ENCODE measurements at regions of chr17 and their contacts with region 1.

Region 1: DNA sequence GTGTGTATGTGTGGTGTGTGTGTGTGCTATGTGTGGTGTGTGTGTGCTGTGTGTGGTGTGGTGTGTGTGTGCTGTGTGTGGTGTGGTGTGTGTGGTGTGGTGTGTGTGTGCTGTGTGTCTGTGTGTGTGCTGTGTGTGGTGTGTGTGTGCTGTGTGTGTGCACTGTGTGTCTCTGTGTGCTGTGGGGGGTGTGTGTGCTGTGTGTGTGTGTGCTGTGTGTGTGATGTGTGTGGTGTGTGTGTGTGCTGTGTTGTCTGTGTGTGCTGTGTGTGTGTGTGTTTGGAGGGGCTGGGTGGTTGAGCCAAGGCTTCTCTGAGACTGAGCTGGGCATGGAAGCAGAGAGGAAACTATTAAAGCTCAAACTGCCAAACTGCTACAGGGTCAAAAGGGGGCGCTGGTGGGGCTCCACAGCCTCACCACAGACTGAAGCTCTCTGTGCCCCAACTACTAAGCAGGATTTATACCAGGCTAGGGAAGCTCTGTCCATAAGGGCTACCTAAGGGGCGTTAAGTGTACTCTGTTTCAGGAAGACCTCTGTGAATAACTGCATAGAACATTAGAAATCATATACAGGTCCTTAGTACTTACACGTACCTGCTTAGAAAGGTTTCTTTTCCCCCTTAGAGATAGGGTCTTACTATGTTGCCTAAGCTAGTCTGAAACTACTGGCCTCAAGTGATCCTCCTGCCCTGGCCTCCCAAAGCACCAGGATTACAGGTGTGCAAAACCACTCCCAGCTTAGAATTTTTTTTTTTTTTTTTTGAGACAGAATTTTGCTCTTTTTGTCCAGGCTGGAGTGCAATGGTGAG is 27.8 kb upstream of the GHDC start:
- DNase-seq: no peak
- ATAC-seq: peak in 5 of 8 donors; percentile 4 to 68 (median 45)
- H3K4me3 ChIP-seq: no peak overlapping the region
- H3K27ac ChIP-seq: no peak overlapping the region
- H3K4me1 ChIP-seq: peaks cover under 1 to 13% (median 4%) of the 10 kb centered on the region in 9 donors
- H3K27me3 ChIP-seq: no peaks in the 10 kb centered on the region
- CTCF ChIP-seq: peak in 8 of 9 donors; percentile 8 to 59 (median 48)

Region 2: GRCh38 chr17:42276359-42276608 is 54.1 kb after region 1 on chr17 and contains the start of gene STAT5B:
- intact Hi-C with region 1: loop called in 3 of 10 experiments (anchors 10 kb)
- DNase-seq: peak; percentile 67 to 82
- ATAC-seq: peak; percentile 77 to 94 (median 82)
- H3K4me3 ChIP-seq: peak within 1 kb of the TSS; percentile 83 to 99 (median 92)
- H3K27ac ChIP-seq: peak within 1 kb of the TSS; percentile 66 to 98 (median 94)
- H3K4me1 ChIP-seq: peaks cover 3 to 51% (median 35%) of the 10 kb centered on the region in 9 donors
- H3K27me3 ChIP-seq: no peaks in the 10 kb centered on the region
- CTCF ChIP-seq: no peak
- total RNA-seq, gene STAT5B: 26.3 to 34.7 (median 30.8) TPM

Region 3: DNA sequence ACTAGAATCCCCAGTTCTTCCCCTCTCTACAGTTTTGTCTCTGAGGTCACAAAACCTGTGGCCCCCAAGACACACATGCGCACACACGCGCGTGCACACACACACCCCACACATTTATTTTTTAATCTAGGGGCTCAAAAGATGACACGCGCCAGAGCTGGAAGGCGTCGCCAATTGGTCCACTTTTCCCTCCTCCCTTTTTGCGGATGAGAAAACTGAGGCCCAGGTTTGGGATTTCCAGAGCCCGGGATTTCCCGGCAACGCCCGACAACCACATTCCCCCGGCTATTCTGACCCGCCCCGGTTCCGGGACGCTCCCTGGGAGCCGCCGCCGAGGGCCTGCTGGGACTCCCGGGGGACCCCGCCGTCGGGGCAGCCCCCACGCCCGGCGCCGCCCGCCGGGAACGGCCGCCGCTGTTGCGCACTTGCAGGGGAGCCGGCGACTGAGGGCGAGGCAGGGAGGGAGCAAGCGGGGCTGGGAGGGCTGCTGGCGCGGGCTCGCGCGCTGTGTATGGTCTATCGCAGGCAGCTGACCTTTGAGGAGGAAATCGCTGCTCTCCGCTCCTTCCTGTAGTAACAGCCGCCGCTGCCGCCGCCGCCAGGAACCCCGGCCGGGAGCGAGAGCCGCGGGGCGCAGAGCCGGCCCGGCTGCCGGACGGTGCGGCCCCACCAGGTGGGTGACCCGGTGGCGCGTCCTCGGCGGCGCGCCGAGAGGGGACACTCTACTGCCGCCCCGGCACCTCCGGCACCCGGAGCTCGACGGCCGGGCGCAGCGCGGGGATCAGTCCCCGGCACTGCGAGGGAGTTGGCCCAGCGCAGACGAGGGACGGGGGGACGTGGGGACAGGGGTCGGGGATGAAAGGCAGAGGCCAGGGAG is 66.0 kb after region 1 on chr17 and contains the start of gene STAT5A:
- intact Hi-C with region 1: loop called in 2 of 10 experiments (anchors 10 kb)
- DNase-seq: peak; percentile 91 to 92
- ATAC-seq: peak; percentile 85 to 95 (median 92)
- H3K4me3 ChIP-seq: peak within 1 kb of the TSS; percentile 50 to 83 (median 66)
- H3K27ac ChIP-seq: peak within 1 kb of the TSS; percentile 78 to 96 (median 90)
- H3K4me1 ChIP-seq: peaks cover 11 to 57% (median 30%) of the 10 kb centered on the region in 9 donors
- H3K27me3 ChIP-seq: no peaks in the 10 kb centered on the region
- CTCF ChIP-seq: peak in 1 of 9 donors; percentile 9
- total RNA-seq, gene STAT5A: 13.4 to 28.5 (median 16.1) TPM

Measured in heart right ventricle (tissue), 16 donors.